ENCODE measurements at regions of chr7 and their contacts with region 1.

Region 1: GRCh38 chr7:26090927-26091519 is 61.0 kb upstream of the NFE2L3 start:
- DNase-seq: peak; percentile 60
- ATAC-seq: peak; percentile 89
- H3K4me3 ChIP-seq: peak overlapping the region; percentile 26; the same call in 1 of the 2 replicates
- H3K27ac ChIP-seq: no peak overlapping the region
- H3K4me1 ChIP-seq: peaks cover 8% of the 10 kb centered on the region
- H3K27me3 ChIP-seq: no peaks in the 10 kb centered on the region
- CTCF ChIP-seq: peak; percentile 88

Region 2: DNA sequence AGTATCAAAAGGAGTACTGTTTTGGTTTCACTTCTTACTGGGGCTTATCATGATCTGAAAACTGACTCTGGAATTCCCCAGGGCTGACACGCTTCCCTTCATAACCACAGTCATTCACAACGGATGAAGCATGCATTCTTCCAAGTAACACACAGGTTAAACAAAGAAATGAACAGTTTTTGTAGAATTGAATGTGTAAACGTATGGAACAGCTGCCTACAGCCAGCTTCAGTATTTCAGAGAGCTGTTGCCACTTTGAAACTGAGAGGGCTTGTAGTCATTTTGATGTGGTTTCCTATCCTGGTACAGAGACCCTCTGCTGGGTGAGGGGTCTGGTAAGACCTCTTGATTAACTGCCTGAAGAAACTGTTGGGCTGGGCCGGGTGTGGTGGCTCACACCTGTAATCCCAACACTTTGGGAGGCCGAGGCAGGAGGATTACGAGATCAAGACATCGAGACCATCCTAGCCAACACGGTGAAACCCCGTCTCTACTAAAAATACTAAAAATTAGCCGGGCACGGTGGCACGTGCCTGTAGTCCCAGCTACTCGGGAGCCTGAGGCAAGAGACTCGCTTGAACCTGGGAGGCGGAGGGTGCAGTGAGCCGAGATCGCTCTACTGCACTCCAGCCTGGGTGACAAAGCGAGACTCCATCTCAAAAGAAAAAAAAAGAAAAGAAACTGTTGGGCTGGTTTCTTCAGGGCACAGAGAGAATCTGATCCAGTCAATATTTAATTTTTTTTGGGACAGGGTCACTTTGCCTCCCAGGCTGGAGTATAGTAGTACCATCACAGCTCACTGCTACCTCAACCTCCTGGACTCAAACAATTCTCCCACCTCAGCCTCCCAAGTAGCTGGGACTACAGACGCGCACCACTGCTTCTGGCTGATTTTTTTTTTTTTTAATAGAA is 65.7 kb after region 1 on chr7:
- CTCF ChIA-PET with region 1: interaction called, 5 read pairs
- POLR2A ChIA-PET with region 1: interaction called, 4 read pairs
- intact Hi-C with region 1: loop called (anchors 5 kb)
- DNase-seq: peak; percentile 93
- ATAC-seq: peak; percentile 48
- H3K4me3 ChIP-seq: peak overlapping the region; percentile 62; the same call in 1 of the 2 replicates
- H3K27ac ChIP-seq: peak overlapping the region; percentile 96
- H3K4me1 ChIP-seq: peaks cover 74% of the 10 kb centered on the region
- H3K27me3 ChIP-seq: no peaks in the 10 kb centered on the region
- CTCF ChIP-seq: no peak

Region 3: GRCh38 chr7:26284995-26285632 is 194.1 kb after region 1 on chr7:
- CTCF ChIA-PET with region 1: interaction called, 3 read pairs
- POLR2A ChIA-PET with region 1: no interaction called
- intact Hi-C with region 1: loop called (anchors 2 kb)
- DNase-seq: peak; percentile 65
- ATAC-seq: peak; percentile 84
- H3K4me3 ChIP-seq: no peak overlapping the region
- H3K27ac ChIP-seq: no peak overlapping the region
- H3K4me1 ChIP-seq: no peaks in the 10 kb centered on the region
- H3K27me3 ChIP-seq: no peaks in the 10 kb centered on the region
- CTCF ChIP-seq: peak; percentile 51

Measured in PC-3 (cell line).